ENCODE measurements at regions of chr15 and their contacts with region 1.

Region 1: GRCh38 chr15:51162865-51163762 is 68.4 kb upstream of the TNFAIP8L3 start:
- DNase-seq: peak; percentile 78
- H3K4me3 Mint-ChIP-seq: peak overlapping the region; percentile 60
- H3K27ac Mint-ChIP-seq: no peak overlapping the region
- H3K4me1 Mint-ChIP-seq: peaks cover 10% of the 10 kb centered on the region
- H3K27me3 Mint-ChIP-seq: no peaks in the 10 kb centered on the region
- CTCF ChIP-seq: peak; percentile 90

Region 2: DNA sequence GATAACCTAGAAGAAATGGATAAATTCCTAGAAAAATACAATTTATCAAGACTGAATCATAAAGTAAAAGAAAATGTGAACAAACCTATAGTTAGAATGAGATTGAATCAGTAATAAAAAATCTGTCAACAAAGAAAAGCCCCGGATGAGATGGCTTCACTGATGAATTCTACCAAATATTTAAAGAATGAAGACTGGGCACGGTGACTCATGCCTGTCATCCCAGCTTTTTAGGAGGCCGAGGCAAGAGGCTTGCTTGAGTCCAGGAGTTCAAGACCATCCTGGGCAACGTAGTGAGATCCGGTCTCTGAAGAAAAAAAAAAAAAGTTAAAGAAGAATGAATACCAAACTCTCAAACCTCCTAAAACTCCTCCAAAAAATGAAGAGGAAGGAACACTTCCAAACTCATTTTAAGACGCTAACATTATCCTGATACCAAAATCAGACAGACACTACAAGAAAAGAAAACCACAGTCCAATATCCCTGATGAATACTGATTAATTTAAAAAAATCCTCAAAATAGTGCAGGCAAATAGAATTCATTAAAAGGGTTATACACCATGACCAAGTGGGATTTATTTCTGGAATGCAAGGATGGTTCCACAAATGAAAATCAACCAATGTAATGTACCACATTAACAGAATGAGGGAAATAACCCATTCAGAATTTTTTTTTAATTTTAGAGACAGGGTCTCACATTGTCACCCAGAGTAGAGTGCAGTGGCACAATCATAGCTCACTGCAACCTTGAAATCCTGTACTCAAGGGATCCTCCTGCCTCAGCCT is 272.1 kb before region 1 on chr15:
- CTCF ChIA-PET with region 1: no interaction called
- POLR2A ChIA-PET with region 1: no interaction called
- intact Hi-C with region 1: no loop called
- DNase-seq: no peak
- H3K4me3 Mint-ChIP-seq: no peak overlapping the region
- H3K27ac Mint-ChIP-seq: no peak overlapping the region
- H3K4me1 Mint-ChIP-seq: peaks cover 6% of the 10 kb centered on the region
- H3K27me3 Mint-ChIP-seq: no peaks in the 10 kb centered on the region
- CTCF ChIP-seq: no peak

Region 3: DNA sequence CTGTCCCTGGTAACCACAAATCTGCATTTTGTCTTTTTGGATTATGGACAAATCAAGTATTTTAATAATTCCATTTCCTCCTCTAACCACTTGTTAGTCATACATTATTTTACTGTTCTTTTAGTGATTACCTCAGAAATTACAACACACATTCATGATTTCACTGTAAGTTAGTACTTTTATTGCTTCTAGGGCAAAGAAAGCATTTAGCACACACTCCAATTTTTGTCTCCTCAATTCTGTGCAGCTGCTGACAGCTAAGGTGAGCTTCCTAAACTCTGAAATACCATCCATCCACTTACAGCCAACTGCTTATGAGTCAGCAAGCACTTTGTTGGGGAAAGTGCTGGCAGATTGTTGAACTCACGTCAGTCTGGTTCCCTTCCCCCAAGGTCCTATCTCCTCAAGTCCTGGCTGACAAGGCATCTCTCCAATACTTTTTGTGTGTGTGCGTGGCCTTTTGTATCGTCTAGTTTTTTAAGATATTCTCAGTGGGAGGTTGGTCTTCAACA is 19.0 kb before region 1 on chr15:
- CTCF ChIA-PET with region 1: interaction called, 44 read pairs
- POLR2A ChIA-PET with region 1: no interaction called
- intact Hi-C with region 1: no loop called
- DNase-seq: peak; percentile 88
- H3K4me3 Mint-ChIP-seq: peak overlapping the region; percentile 26
- H3K27ac Mint-ChIP-seq: peak overlapping the region; percentile 66
- H3K4me1 Mint-ChIP-seq: peaks cover 12% of the 10 kb centered on the region
- H3K27me3 Mint-ChIP-seq: no peaks in the 10 kb centered on the region
- CTCF ChIP-seq: no peak

Region 4: GRCh38 chr15:51198701-51199232 is 35.7 kb after region 1 on chr15:
- CTCF ChIA-PET with region 1: interaction called, 116 read pairs
- POLR2A ChIA-PET with region 1: no interaction called
- intact Hi-C with region 1: no loop called
- DNase-seq: no peak
- H3K4me3 Mint-ChIP-seq: no peak overlapping the region
- H3K27ac Mint-ChIP-seq: no peak overlapping the region
- H3K4me1 Mint-ChIP-seq: peaks cover 12% of the 10 kb centered on the region
- H3K27me3 Mint-ChIP-seq: no peaks in the 10 kb centered on the region
- CTCF ChIP-seq: no peak

Region 5: DNA sequence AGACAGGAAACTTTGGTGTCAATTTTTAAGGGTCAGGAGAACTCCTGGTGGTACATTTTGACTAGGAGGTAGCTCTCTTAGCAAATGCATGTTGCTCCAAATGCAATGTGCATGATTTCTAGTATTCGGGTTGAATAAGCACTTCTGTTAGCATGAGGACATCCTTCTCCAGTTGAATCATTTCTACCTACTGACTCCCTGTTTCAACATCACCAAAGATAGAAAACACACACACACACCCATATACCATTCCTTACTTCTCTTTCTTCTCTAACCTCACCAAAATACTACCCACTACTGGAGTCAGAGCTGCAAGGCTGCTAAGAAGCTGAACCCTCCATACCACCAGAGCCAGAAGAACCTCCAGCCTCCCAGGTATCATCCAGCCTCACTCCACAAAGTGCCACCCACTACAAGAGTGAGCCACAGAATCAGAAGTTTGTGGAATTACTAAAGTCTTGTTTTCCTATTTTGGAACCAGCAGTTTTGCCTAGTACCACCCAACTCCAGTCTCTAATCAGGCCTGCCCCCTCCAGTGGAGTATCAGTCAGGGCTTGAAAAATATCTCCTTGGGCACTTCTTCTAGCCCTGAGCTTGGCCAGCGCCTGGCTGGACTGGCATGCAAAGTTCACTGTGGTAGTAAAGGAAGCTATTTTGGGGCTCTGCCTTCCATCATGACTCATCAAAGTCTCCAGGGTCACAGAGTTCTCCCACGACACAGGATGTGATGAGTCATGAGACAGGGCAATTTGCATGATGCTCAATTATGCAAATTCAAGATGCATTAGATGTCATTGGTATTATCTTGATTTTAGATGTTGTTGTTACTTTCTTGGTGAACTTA is 65.0 kb after region 1 on chr15:
- CTCF ChIA-PET with region 1: interaction called, 13 read pairs
- POLR2A ChIA-PET with region 1: interaction called, 5 read pairs
- intact Hi-C with region 1: no loop called
- DNase-seq: peak; percentile 82
- H3K4me3 Mint-ChIP-seq: peak overlapping the region; percentile 22
- H3K27ac Mint-ChIP-seq: peak overlapping the region; percentile 57
- H3K4me1 Mint-ChIP-seq: peaks cover 34% of the 10 kb centered on the region
- H3K27me3 Mint-ChIP-seq: no peaks in the 10 kb centered on the region
- CTCF ChIP-seq: no peak

Region 6: GRCh38 chr15:51286791-51287190 is 123.7 kb after region 1 on chr15:
- CTCF ChIA-PET with region 1: interaction called, 56 read pairs
- POLR2A ChIA-PET with region 1: interaction called, 4 read pairs
- intact Hi-C with region 1: no loop called
- DNase-seq: peak; percentile 56
- H3K4me3 Mint-ChIP-seq: no peak overlapping the region
- H3K27ac Mint-ChIP-seq: no peak overlapping the region
- H3K4me1 Mint-ChIP-seq: peaks cover 9% of the 10 kb centered on the region
- H3K27me3 Mint-ChIP-seq: no peaks in the 10 kb centered on the region
- CTCF ChIP-seq: no peak

Region 7: DNA sequence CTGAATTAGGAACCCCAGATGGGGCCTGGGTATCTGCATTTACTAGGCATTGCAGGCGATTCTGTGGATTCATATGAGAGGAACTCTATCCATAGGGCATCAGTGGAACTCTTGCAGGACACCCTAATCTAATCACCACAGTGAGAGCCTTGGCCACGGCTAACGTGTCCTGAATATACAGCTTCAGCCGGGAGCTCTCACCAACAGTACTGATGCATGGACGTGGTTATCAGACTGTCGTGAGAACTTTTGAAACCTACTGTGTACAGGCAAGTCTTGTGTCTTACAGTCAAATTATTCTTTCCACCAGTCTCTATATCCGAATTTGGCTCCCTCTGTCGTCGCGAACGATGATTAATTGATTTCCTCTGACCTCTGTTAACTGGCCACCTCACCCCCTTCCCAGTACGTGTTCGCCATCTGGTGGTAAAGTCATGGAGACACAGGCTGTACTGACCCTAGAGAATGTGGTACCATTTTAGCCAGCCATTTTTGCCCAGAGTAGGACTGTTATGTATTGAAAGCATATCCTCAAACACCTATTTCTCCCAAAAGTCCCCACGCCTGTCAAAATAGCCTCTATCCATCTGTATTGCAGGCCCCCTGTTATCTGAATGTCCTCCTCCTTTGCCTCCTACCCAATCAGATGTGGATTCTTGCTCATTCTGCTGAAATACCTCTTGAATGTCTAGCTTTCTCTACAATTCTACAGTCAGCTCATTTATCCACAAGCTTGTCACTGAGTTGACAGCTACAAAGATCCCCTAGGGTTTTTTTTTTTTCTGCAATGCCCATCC is 218.1 kb after region 1 on chr15:
- CTCF ChIA-PET with region 1: interaction called, 195 read pairs
- POLR2A ChIA-PET with region 1: interaction called, 12 read pairs
- intact Hi-C with region 1: no loop called
- DNase-seq: peak; percentile 87
- H3K4me3 Mint-ChIP-seq: no peak overlapping the region
- H3K27ac Mint-ChIP-seq: no peak overlapping the region
- H3K4me1 Mint-ChIP-seq: peaks cover 13% of the 10 kb centered on the region
- H3K27me3 Mint-ChIP-seq: no peaks in the 10 kb centered on the region
- CTCF ChIP-seq: peak; percentile 82

Region 8: GRCh38 chr15:51499379-51499976 is 336.4 kb after region 1 on chr15:
- CTCF ChIA-PET with region 1: interaction called, 11 read pairs
- POLR2A ChIA-PET with region 1: no interaction called
- intact Hi-C with region 1: loop called (anchors 1 kb)
- DNase-seq: peak; percentile 54
- H3K4me3 Mint-ChIP-seq: no peak overlapping the region
- H3K27ac Mint-ChIP-seq: no peak overlapping the region
- H3K4me1 Mint-ChIP-seq: no peaks in the 10 kb centered on the region
- H3K27me3 Mint-ChIP-seq: no peaks in the 10 kb centered on the region
- CTCF ChIP-seq: peak; percentile 59